GM13977 (cell line): ENCODE measurements at regions of chr6 and their contacts with region 1.

Region 1: GRCh38 chr6:160766989-160767660 is 65.1 kb downstream of the PLG start:
- DNase-seq: peak; percentile 87
- CTCF ChIP-seq: peak; percentile 85

Region 2: GRCh38 chr6:160733050-160733646 is 34.0 kb before region 1 on chr6:
- in situ Hi-C with region 1: no loop called
- DNase-seq: peak; percentile 34
- CTCF ChIP-seq: peak; percentile 88

Region 3: DNA sequence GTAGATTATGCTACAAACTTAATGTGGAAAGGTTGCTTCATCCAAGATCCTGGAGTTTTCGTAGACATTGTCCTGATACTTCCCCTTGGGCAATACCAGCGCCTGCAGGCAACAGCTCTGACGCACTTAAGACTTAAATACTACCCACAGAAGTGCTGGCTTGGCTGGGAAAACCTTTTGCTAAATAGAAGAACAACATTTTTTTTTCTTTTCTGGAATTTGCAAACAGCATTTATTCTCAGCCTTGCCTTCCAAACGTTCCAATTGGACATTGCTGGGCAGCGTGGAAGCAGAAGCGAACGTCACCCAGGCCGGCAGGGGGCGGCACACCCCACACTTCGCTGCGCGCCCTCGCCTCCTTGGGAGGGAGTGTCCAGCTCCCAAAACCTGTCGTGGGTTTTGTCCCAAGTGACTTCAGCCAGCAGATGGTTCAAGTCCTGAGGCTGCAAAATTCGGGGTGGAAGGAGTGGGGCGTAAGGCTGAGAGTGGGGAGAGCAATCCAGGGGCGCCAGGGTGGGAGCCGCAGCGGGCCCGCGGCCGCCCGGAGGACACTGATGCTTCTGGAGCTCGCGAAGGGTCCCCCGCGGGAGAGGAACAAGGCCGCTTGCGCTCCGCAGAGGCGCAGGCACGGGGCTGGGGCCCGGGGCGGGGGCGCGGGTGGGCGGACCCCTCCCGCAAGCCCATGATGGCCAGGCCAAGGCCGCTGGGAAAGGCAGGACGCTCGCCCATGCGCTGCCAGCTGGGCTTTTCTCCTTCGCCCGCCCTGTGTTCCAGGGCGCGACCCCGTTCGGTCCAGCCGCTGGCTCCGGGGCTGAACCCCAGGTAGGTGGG is 163.6 kb after region 1 on chr6:
- in situ Hi-C with region 1: loop called (anchors 25 kb)
- DNase-seq: peak; percentile 85
- CTCF ChIP-seq: peak; percentile 95